Activated T-helper 2 cell treated with anti-CD3 and anti-CD28 coated beads, Interferon-gamma antibody, Interleukin-2, Interleukin-4, amounts not matched to agents 10 μg/mL and 5 μg/mL and 100 μg/mL, durations not matched to agents 14 hours and 24 hours and 36 hours (primary cell): ENCODE measurements at regions of chr6 and their contacts with region 1.

Region 1: GRCh38 chr6:131135244-131136020 is at the start of gene AKAP7:
- DNase-seq: peak; percentile 46
- H3K4me3 Mint-ChIP-seq: peak within 1 kb of the TSS; percentile 93
- H3K27ac Mint-ChIP-seq: peak within 1 kb of the TSS; percentile 92
- H3K4me1 Mint-ChIP-seq: peaks cover 14% of the 10 kb centered on the region
- H3K27me3 Mint-ChIP-seq: peaks cover 32% of the 10 kb centered on the region
- total RNA-seq, gene AKAP7: 3.1 and 3.4 TPM in 2 replicates

Region 2: GRCh38 chr6:131063028-131063763 is 72.2 kb before region 1 on chr6 and contains the start of gene EPB41L2:
- intact Hi-C with region 1: loop called (anchors 2 kb)
- DNase-seq: peak; percentile 68
- H3K4me3 Mint-ChIP-seq: peak within 1 kb of the TSS; percentile 78
- H3K27ac Mint-ChIP-seq: no peak within 1 kb of the TSS
- H3K4me1 Mint-ChIP-seq: peaks cover 26% of the 10 kb centered on the region
- H3K27me3 Mint-ChIP-seq: peaks cover 32% of the 10 kb centered on the region
- total RNA-seq, gene EPB41L2: 20.8 and 26.9 TPM in 2 replicates